Motor neuron (in vitro differentiated cells): ENCODE measurements at regions of chr2 and their contacts with region 1.

Region 1: DNA sequence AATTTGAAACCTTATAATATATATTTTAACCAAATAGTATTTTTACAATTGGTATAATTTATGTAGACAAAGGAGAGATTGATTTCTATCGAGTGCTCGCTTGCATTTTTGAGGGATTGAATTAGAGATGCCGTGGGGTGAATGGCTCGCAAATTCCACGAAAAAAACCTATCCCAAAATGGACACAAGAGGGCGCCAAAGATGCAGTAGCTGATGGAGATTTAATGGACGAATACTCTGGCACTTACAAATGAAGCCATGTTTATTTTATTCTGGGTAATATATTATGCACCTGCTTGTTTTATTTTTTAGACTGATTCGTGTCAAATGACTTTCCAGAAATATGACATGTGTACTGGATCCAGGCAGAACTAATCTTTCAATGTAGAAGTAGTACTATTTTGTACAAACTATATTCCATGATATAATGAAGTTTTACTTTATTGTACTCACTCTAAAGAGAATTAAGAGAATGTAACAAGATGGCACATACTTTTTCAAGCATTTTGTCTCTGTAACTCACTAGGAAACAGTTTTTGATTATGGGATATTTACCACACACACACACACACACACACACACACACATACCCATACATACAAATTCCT is 505.4 kb downstream of the PLCL1 start:
- ATAC-seq: peak in 3 of 8 experiments; percentile 35 to 53 (median 50)
- H3K4me3 ChIP-seq: no peak overlapping the region
- H3K27ac ChIP-seq: no peak overlapping the region
- H3K4me1 ChIP-seq: no peaks in the 10 kb centered on the region

Region 2: DNA sequence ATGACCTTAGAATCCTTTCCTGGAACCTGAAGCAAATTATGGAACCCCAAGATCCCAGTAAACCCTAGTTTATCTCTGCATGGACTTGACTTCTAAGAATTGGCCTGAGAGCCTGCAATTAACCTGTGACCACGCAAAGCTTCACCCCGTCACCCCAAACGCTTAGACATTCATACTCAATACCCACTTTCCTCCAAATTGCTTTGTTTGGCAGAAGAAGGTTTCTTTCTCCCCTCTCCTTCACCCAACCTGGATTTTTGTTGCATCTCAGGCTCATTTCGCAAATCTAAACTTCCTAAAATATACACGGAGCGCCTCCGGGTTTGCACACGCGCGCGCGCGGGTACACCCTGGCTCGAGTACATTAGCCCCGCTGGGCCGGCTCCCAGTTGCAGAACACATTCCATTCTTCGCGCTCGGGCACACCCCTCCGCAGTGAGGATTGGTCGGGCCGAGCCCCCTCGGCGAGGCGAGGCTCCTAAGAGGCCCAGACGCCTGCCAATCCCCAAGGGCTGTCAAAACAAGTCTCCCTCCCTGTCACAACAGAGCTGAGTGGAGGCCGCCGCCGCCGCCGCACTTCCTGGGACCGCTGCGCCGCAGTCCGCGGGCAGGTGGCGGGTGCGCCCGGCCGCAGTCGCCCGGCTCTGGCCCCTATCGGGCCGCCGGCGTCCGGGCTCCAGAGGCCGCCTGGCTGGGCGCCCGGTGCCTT is 505.6 kb before region 1 on chr2 and contains the start of gene PLCL1:
- in situ Hi-C with region 1: loop called in 1 of 9 experiments (anchors 10 kb)
- ATAC-seq: peak; percentile 96 to 99 (median 97)
- H3K4me3 ChIP-seq: peak within 1 kb of the TSS; percentile 61 to 90 (median 67)
- H3K27ac ChIP-seq: peak within 1 kb of the TSS in 1 of 2 donors; percentile 2
- H3K4me1 ChIP-seq: peaks cover 7 to 21% of the 10 kb centered on the region in 2 donors
- total RNA-seq, gene PLCL1: 7.0 to 16.8 (median 10.1) TPM

Region 3: GRCh38 chr2:199278099-199278498 is 968.3 kb after region 1 on chr2:
- in situ Hi-C with region 1: loop called in 1 of 9 experiments (anchors 25 kb)
- ATAC-seq: no peak
- H3K4me3 ChIP-seq: no peak overlapping the region
- H3K27ac ChIP-seq: no peak overlapping the region
- H3K4me1 ChIP-seq: no peaks in the 10 kb centered on the region

Region 4: DNA sequence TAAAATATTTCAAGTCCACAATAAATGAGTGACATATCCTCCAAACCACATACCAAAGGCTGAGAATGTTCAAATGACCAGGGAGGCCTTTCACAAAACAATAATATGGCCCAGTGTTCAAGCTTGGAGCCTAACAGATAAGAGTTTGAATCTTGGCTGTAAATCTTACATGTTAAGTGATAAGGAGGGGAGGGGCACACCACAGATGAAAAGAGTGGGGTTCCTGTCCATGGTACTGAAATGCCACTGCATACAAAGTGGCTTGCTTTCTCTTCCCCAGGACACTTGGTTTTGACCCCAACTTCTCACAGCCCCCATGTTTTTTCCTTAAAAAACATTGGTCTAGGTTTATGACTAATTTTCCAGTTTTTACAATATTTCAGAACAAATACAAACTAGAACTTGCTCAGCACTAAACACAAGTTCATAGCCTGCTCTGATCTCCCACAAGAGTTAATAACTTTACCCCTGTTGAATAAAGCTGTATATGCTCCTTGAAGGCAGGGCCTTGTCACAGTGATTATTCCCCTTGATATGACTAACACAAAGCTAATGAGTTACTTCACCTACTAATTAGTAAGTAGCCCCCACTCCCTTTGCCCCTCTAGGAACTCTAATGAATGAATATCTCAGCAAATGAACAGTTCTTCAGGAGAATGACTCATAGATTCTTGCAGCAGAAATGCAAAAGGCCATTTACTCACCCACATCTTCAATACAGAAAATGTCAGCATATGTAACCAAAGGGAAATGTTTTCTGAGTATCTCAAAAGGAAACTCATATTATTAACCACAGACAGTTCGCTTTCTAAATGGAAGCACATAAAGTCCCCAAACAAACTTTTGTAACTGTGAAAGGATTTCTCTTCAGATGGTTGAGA is 1005.8 kb after region 1 on chr2:
- in situ Hi-C with region 1: no loop called
- ATAC-seq: peak in 3 of 8 experiments; percentile 16 to 71 (median 69)
- H3K4me3 ChIP-seq: no peak overlapping the region
- H3K27ac ChIP-seq: no peak overlapping the region
- H3K4me1 ChIP-seq: peaks cover 10 to 14% of the 10 kb centered on the region in 2 donors

Region 5: DNA sequence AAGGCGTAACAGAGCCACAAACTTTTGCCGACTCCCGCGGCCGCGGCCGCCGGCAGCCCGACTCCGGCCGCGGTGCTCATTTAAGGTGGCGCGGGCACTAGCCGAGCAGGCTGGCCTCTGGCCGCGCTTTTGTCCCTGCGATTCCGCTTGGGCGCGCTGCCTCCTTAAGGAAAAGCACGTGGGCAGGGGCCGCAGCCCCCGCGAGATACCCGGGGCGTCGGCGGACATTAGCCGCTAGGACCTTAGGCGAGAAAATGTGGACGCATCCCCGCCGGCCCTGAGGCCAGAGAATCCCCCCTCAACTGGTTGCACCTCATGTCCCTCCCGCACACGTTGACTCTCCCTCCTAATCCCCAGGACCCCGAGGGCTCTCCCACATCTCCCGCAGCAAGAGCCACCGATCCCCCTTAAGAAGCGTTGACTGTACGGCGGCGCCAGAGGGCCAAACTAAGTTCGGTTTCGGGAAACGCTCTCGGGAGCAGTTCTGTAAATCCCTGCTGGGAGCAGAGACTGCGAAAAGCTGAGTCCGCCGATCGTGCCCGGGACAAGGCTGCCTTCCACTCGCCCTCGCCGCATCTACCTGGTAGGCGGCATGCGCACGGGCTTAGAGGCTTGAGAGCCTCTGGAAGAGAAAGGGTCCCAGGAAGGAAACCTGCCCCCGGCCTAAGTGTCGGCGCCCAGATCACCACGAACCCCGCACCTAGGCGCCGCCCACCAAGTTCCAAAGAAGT is 1149.7 kb after region 1 on chr2:
- in situ Hi-C with region 1: loop called in 1 of 9 experiments (anchors 25 kb)
- ATAC-seq: peak; percentile 40 to 75 (median 68)
- H3K4me3 ChIP-seq: peak overlapping the region; percentile 60 to 97 (median 88)
- H3K27ac ChIP-seq: no peak overlapping the region
- H3K4me1 ChIP-seq: peaks cover 8 to 13% of the 10 kb centered on the region in 2 donors

Region 6: DNA sequence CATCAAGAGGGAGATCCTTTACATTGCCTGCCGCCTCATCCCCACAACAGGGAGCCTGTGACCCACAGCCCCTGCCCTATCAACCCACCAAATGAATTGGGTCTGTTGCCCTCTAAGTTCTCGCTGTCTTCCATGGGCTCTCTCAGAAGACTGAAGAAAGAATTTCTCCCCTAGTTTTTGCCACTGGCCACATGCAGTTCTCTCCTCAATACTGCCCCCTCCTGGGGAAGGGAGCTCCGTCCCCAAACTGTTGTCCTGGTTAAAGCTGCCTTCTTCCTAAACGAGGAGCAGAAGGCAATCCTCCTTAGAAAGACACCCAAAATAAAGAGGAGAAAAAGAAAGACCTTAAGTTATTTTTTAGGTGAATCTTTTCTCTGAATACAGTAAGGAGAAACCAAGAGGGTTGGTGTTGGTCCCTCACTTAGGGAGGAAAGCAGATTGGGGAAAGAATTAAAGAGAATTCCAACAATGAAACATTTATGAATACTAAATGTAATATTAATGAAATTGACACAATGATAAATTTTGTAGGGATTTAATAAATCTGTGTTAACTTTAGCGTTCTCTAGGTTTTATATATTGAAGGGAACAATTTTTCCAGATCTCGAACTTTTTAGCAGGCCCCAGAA is 1179.1 kb after region 1 on chr2:
- in situ Hi-C with region 1: loop called in 5 of 9 experiments (anchors 10 to 25 kb)
- ATAC-seq: peak in 3 of 8 experiments; percentile 41 to 60 (median 47)
- H3K4me3 ChIP-seq: no peak overlapping the region
- H3K27ac ChIP-seq: no peak overlapping the region
- H3K4me1 ChIP-seq: no peaks in the 10 kb centered on the region

Region 7: DNA sequence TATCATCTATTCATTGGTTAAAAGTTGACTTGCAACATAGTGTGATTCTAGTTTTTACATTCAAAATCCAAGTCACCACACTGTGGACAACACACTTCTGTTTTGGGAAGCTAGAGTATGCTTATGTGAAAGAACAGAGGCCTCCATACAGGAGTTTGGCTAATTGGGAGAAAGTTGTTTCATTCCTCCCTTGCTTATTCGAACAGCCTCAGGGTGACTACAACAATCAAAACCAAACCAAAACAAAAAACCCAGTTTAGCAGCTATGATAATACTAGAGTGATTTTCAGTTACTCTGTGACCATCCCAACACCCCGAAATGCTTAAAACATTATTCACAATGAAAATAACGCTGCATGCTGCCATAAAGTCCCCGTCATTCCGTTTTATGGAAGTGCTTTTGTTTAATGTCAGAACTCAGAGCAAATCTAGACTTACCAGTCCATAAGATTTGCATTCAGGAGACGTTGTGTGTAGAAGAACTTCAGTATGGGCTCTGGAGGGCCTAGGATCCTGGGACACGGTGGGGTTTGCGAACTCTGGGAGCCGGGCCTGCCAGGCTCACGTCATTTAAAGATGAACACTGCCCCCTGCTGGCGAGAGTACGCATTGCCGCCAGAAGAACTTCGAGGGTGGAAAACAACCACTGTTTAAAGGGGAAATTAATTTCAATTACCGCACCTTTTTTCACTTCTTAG is 1429.8 kb after region 1 on chr2:
- in situ Hi-C with region 1: loop called in 6 of 9 experiments (anchors 10 to 25 kb)
- ATAC-seq: peak in 7 of 8 experiments; percentile 48 to 72 (median 54)
- H3K4me3 ChIP-seq: no peak overlapping the region
- H3K27ac ChIP-seq: no peak overlapping the region
- H3K4me1 ChIP-seq: peaks cover 0 to 4% of the 10 kb centered on the region in 2 donors

Region 8: GRCh38 chr2:199850718-199851500 is 1541.1 kb after region 1 on chr2 and contains the start of gene FTCDNL1:
- in situ Hi-C with region 1: loop called in 3 of 9 experiments (anchors 25 kb)
- ATAC-seq: peak; percentile 93 to 96 (median 94)
- H3K4me3 ChIP-seq: peak within 1 kb of the TSS; percentile 47 to 60 (median 55)
- H3K27ac ChIP-seq: peak within 1 kb of the TSS; percentile 24 to 40
- H3K4me1 ChIP-seq: peaks cover 3 to 5% of the 10 kb centered on the region in 2 donors
- total RNA-seq, gene FTCDNL1: 0.75 to 3.7 (median 2.1) TPM